HCT116 (cell line): ENCODE measurements at regions of chr4 and their contacts with region 1.

Region 1: GRCh38 chr4:92455951-92456350 is 152.2 kb downstream of the GRID2 start:
- DNase-seq: no peak
- ATAC-seq: no peak
- H3K4me3 ChIP-seq: no peak overlapping the region
- H3K27ac ChIP-seq: no peak overlapping the region
- H3K4me1 ChIP-seq: no peaks in the 10 kb centered on the region
- H3K27me3 ChIP-seq: no peaks in the 10 kb centered on the region
- CTCF ChIP-seq: no peak
- POLR2A ChIP-seq: no peak
- RAD21 ChIP-seq: no peak

Region 2: GRCh38 chr4:92483362-92483761 is 27.4 kb after region 1 on chr4:
- CTCF ChIA-PET with region 1: no interaction called
- POLR2A ChIA-PET with region 1: no interaction called
- RAD21 ChIA-PET with region 1: no interaction called
- intact Hi-C with region 1: loop called (anchors 1 kb)
- DNase-seq: no peak
- ATAC-seq: no peak
- H3K4me3 ChIP-seq: no peak overlapping the region
- H3K27ac ChIP-seq: no peak overlapping the region
- H3K4me1 ChIP-seq: no peaks in the 10 kb centered on the region
- H3K27me3 ChIP-seq: no peaks in the 10 kb centered on the region
- CTCF ChIP-seq: no peak
- POLR2A ChIP-seq: no peak
- RAD21 ChIP-seq: no peak